Esophagus muscularis mucosa (tissue), 4 donors: ENCODE measurements at regions of chr6 and their contacts with region 1.

Region 1: GRCh38 chr6:106553440-106553839 is 75.9 kb downstream of the RTN4IP1 start:
- DNase-seq: no peak
- H3K4me3 ChIP-seq: no peak overlapping the region
- H3K27ac ChIP-seq: no peak overlapping the region
- H3K4me1 ChIP-seq: no peaks in the 10 kb centered on the region
- H3K27me3 ChIP-seq: no peaks in the 10 kb centered on the region
- CTCF ChIP-seq: no peak
- EP300 ChIP-seq: no peak
- POLR2A ChIP-seq: no peak

Region 2: GRCh38 chr6:106512048-106512967 is 41.1 kb before region 1 on chr6:
- intact Hi-C with region 1: loop called (anchors 5 kb)
- DNase-seq: no peak
- H3K4me3 ChIP-seq: peak overlapping the region; percentile 66 to 84 (median 71)
- H3K27ac ChIP-seq: peak overlapping the region; percentile 71 to 80 (median 76)
- H3K4me1 ChIP-seq: peaks cover 30 to 45% (median 35%) of the 10 kb centered on the region in 4 donors
- H3K27me3 ChIP-seq: peaks cover 6 to 61% (median 37%) of the 10 kb centered on the region in 4 donors
- CTCF ChIP-seq: peak in 1 of 3 experiments; percentile 11
- EP300 ChIP-seq: no peak
- POLR2A ChIP-seq: no peak

Region 3: GRCh38 chr6:107110200-107110599 is 556.8 kb after region 1 on chr6:
- intact Hi-C with region 1: no loop called
- DNase-seq: no peak
- H3K4me3 ChIP-seq: no peak overlapping the region
- H3K27ac ChIP-seq: no peak overlapping the region
- H3K4me1 ChIP-seq: peaks cover 8 to 9% (median 9%) of the 10 kb centered on the region in 4 donors
- H3K27me3 ChIP-seq: no peaks in the 10 kb centered on the region
- CTCF ChIP-seq: no peak
- EP300 ChIP-seq: no peak
- POLR2A ChIP-seq: no peak